Activated CD4-positive, alpha-beta memory T cell treated with anti-CD3 and anti-CD28 coated beads, Interleukin-2, amount 10 ng/mL, durations not matched to agents 7 days and 5 days (primary cell): ENCODE measurements at regions of chr12 and their contacts with region 1.

Region 1: DNA sequence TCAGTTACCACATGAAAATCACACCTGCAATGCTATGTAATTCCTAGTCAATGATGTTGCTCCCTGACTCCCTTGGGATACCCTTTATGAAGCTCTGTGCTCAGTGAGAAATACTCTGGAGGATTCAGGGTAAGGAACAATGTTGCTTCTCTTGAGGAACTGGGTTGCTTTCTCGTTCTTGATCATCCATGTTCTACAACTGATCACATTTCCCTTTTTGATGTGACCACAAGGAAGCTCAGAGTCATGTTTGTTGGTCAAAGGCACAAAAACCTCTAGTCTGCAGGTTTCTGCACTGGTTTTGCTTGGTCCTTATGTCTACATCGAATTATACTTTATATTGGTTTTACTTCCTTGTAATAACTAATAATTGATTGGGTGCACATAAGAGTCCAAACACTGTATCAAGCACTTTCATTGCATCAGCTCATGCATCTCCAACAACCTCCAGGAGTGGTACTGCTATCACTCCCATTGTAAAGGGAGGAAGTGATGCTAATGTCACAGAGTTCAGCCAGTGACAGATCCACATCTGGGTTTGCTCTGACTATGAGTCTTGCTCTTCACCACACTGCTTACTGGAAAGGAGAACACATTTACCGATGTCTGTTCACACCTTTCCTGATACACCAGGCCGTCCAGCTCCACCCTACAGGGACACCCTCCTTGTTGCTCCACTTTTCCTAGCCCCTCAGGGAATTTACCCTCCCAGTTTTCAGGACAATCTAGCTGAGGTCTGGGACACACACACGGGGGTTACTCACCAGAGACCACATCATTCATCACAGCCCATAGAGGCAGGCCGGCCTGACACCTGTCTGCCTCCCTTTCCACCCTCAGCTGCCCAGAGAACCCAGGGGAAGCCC is 41.0 kb downstream of the CMKLR1 start:
- DNase-seq: peak; percentile 21
- H3K4me3 Mint-ChIP-seq: no peak overlapping the region
- H3K27ac Mint-ChIP-seq: peak overlapping the region; percentile 84
- H3K4me1 Mint-ChIP-seq: peaks cover 52% of the 10 kb centered on the region
- H3K27me3 Mint-ChIP-seq: peaks cover 5% of the 10 kb centered on the region

Region 2: GRCh38 chr12:108282676-108283075 is 15.5 kb before region 1 on chr12:
- CTCF ChIA-PET with region 1: no interaction called
- POLR2A ChIA-PET with region 1: no interaction called
- DNase-seq: no peak
- H3K4me3 Mint-ChIP-seq: no peak overlapping the region
- H3K27ac Mint-ChIP-seq: no peak overlapping the region
- H3K4me1 Mint-ChIP-seq: peaks cover 15% of the 10 kb centered on the region
- H3K27me3 Mint-ChIP-seq: peaks cover 13% of the 10 kb centered on the region

Region 3: DNA sequence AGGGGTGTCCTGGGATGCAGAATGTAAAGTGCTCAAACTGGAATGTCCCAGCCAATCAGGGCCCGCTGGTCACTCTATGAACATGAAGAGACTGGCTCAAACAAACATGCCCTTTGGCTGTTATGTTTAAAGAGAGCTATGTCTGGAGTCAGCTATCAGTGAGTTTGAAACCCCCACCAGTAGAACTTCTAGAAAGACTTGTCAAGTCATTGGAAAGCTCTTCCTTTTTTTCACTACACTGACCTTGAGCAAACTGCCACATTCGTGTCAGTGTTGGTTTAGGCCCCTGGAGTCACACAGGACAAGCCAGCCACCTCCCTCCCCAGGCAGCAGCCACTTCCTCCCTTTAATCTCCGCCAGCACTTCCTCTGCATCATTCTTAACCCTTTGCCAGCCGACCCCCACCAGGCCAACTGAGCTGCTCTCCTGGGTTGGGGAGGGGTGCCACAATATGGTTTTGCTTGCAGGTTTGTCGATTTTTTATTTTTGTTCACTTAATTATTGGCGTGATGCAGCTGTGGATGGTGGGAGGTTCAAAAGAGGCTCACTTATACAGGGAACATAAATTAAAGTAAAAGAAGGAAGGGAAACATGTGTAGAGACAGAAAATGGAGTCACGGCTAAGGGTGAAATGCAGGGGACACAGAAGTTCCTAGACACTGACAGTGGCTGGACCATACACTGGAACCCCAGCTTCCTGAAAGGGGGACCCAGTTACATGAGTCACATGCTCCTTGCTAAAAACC is 15.7 kb after region 1 on chr12:
- CTCF ChIA-PET with region 1: interaction called, 17 read pairs
- POLR2A ChIA-PET with region 1: interaction called, 21 read pairs
- DNase-seq: peak; percentile 27
- H3K4me3 Mint-ChIP-seq: no peak overlapping the region
- H3K27ac Mint-ChIP-seq: peak overlapping the region; percentile 61
- H3K4me1 Mint-ChIP-seq: peaks cover 16% of the 10 kb centered on the region
- H3K27me3 Mint-ChIP-seq: peaks cover 5% of the 10 kb centered on the region

Region 4: GRCh38 chr12:108360487-108360886 is 62.4 kb after region 1 on chr12:
- CTCF ChIA-PET with region 1: no interaction called
- POLR2A ChIA-PET with region 1: no interaction called
- DNase-seq: no peak
- H3K4me3 Mint-ChIP-seq: no peak overlapping the region
- H3K27ac Mint-ChIP-seq: no peak overlapping the region
- H3K4me1 Mint-ChIP-seq: no peaks in the 10 kb centered on the region
- H3K27me3 Mint-ChIP-seq: peaks cover 3% of the 10 kb centered on the region